Right cardiac atrium (tissue), 5 donors: ENCODE measurements at regions of chr20 and their contacts with region 1.

Region 1: GRCh38 chr20:60446267-60447111 is 488.3 kb downstream of the CDH26 start:
- DNase-seq: no peak
- ATAC-seq: no peak
- H3K4me3 ChIP-seq: no peak overlapping the region
- H3K27ac ChIP-seq: no peak overlapping the region
- H3K4me1 ChIP-seq: no peaks in the 10 kb centered on the region
- H3K27me3 ChIP-seq: no peaks in the 10 kb centered on the region

Region 2: DNA sequence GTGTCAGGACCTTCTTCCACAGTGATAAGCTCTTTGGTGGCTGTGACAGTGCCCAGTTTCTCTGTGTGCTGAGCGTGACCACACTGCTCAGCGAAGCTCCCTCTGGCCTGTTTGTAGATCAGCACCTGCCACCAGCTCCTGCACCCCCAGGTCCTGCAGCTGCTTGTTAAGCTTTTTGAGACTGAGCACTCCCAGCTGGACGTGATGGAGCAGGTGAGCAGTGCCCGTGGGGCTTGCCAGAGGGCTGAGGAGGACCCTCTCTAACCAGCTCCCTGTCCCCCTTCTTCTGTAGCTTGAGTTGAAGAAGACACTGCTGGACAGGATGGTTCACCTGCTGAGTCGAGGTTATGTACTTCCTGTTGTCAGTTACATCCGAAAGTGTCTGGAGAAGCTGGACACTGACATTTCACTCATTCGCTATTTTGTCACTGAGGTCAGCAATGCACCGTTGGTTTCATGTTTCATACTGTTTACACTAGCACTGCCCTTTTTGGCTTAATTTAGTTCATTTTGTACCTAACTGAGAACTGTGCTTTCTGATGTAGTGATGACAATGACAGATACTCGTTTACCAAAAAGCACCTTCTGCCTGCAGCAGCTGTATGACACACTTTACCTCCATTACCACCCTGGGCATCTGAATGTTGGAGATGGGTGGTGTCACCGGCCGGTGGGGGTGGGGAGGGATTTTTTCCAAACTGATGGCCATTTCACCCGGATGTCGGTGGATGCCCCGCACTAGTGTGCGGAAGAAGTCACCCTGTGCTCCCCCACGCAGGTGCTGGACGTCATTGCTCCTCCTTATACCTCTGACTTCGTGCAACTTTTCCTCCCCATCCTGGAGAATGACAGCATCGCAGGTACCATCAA is 1452.9 kb before region 1 on chr20:
- intact Hi-C with region 1: no loop called
- DNase-seq: peak in 1 of 3 donors; percentile 13
- ATAC-seq: peak in 1 of 2 donors; percentile 12
- H3K4me3 ChIP-seq: no peak overlapping the region
- H3K27ac ChIP-seq: no peak overlapping the region
- H3K4me1 ChIP-seq: no peaks in the 10 kb centered on the region
- H3K27me3 ChIP-seq: no peaks in the 10 kb centered on the region

Region 3: GRCh38 chr20:60507087-60507694 is 60.7 kb after region 1 on chr20:
- intact Hi-C with region 1: loop called in 1 of 4 experiments (anchors 10 kb)
- DNase-seq: no peak
- ATAC-seq: no peak
- H3K4me3 ChIP-seq: no peak overlapping the region
- H3K27ac ChIP-seq: no peak overlapping the region
- H3K4me1 ChIP-seq: no peaks in the 10 kb centered on the region
- H3K27me3 ChIP-seq: no peaks in the 10 kb centered on the region

Region 4: DNA sequence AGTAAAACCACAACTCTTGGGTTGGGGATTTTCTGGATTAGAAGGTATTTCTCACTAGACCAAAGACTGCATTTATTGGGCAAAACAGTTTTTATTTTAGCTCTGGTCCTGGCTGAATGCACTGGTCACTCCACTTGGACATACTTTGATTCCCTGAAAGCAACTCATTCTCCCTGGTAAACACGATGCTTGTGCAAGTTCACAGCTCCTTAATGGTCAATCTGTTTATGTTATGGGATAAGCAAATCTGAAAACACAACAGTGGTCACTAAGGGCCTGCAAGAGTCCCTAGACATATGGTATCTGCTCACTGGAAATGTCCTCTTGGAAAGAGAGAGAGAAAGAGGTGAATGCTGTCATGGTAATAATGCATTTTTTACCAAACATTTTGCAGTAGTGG is 71.5 kb after region 1 on chr20:
- intact Hi-C with region 1: no loop called
- DNase-seq: no peak
- ATAC-seq: no peak
- H3K4me3 ChIP-seq: no peak overlapping the region
- H3K27ac ChIP-seq: no peak overlapping the region
- H3K4me1 ChIP-seq: no peaks in the 10 kb centered on the region
- H3K27me3 ChIP-seq: no peaks in the 10 kb centered on the region

Region 5: DNA sequence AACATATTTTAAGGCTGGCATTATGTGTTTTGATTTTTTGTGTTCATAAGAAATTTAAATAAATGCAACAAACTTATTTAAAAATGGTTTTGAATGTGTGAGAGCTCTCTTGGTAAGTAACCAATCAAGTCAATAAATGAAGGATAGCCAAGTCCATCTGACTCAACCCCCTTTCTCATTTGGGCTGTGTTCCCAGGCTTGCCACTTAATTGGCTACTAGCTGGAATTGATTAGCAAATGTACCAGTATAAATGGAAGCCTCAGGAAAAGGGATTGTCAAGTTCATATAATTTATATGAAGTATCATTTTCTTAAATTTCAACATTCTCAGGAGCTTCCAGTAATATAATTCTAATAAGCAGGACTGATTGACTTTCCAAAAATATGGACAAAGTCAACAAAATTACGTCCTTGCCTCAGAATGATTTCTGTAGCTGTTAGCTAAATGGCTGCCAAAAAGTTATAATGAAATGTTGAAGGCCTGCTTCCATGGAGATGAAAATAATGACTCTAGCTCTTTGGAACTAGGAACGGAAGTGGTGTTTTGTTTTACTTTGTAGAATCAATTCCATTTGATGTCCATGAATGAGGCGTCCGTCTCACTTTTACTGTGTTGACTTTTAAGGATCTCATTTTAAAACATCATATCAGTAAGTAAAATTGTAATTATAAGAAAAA is 126.7 kb after region 1 on chr20:
- intact Hi-C with region 1: no loop called
- DNase-seq: no peak
- ATAC-seq: peak in 1 of 2 donors; percentile 38
- H3K4me3 ChIP-seq: no peak overlapping the region
- H3K27ac ChIP-seq: no peak overlapping the region
- H3K4me1 ChIP-seq: no peaks in the 10 kb centered on the region
- H3K27me3 ChIP-seq: no peaks in the 10 kb centered on the region